ENCODE measurements at regions of chr6 and their contacts with region 1.

Region 1: DNA sequence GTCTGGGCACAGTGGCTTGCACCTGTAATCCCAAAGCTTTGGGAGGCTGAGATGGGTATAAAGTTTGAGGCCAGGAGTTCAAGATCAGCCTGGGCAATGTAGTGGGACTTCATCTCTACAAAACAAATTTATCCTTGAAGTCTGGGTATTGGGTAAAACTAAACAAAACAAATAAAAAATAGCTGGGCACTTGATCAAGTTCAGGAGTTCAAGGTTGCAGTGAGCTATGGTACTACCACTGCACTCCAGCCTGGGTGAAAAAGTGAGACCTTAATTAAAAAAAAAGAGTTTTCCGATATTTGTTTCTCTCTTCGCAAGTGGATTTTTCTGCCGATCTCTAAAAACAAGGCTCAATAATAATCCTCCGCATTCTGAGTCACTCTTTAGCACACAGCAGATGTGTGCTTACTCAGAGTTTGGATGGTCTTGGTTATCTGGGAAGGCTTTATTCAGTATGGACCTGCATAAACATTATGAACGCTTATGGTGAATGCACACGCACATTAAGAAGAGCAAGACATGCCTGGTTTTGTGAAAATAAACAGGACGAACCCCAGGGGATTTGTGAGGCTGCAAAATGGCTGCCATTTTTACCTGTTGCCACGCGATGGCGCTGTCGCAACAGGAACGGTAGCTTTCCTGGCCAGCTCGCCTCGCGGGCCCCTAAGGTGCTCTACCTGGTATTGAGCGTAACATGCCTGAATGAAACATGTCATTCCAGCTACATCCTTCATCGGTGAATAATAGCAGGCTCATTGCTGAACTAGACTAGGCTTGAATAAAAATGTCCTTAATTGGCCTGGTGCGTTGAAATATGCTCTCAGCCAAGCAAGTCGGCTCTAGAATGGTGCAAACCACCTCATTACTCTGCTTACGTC is 6.0 kb downstream of the OPN5 start:
- DNase-seq: peak; percentile 48
- ATAC-seq: peak; percentile 53 to 69

Region 2: GRCh38 chr6:48765352-48765961 is 977.6 kb after region 1 on chr6:
- intact Hi-C with region 1: loop called in 1 of 2 experiments (anchors 5 kb)
- DNase-seq: no peak
- ATAC-seq: peak; percentile 53 to 71

Region 3: GRCh38 chr6:49409951-49410542 is 1622.2 kb after region 1 on chr6:
- intact Hi-C with region 1: loop called in 1 of 2 experiments (anchors 5 kb)
- DNase-seq: peak; percentile 56
- ATAC-seq: peak; percentile 47 to 65